Ascending aorta (tissue), 2 donors: ENCODE measurements at regions of chr4 and their contacts with region 1.

Region 1: GRCh38 chr4:88535090-88535755 is 11.6 kb upstream of the PYURF start:
- DNase-seq: no peak
- H3K4me3 ChIP-seq: no peak overlapping the region
- H3K27ac ChIP-seq: no peak overlapping the region
- H3K4me1 ChIP-seq: peaks cover 0 to 5% of the 10 kb centered on the region in 2 donors
- H3K27me3 ChIP-seq: no peaks in the 10 kb centered on the region
- CTCF ChIP-seq: no peak

Region 2: GRCh38 chr4:88514557-88515511 is 20.4 kb before region 1 on chr4:
- intact Hi-C with region 1: no loop called
- DNase-seq: no peak
- H3K4me3 ChIP-seq: no peak overlapping the region
- H3K27ac ChIP-seq: no peak overlapping the region
- H3K4me1 ChIP-seq: peaks cover 0 to 4% of the 10 kb centered on the region in 2 donors
- H3K27me3 ChIP-seq: no peaks in the 10 kb centered on the region
- CTCF ChIP-seq: no peak

Region 3: GRCh38 chr4:88573995-88574394 is 38.8 kb after region 1 on chr4:
- intact Hi-C with region 1: loop called (anchors 5 kb)
- DNase-seq: no peak
- H3K4me3 ChIP-seq: no peak overlapping the region
- H3K27ac ChIP-seq: no peak overlapping the region
- H3K4me1 ChIP-seq: peaks cover 0 to 6% of the 10 kb centered on the region in 2 donors
- H3K27me3 ChIP-seq: no peaks in the 10 kb centered on the region
- CTCF ChIP-seq: peak in 2 of 3 experiments; percentile 30 to 32